Endothelial cell of umbilical vein (primary cell): ENCODE measurements at regions of chr6 and their contacts with region 1.

Region 1: GRCh38 chr6:43506667-43507471 is 3.3 kb downstream of the LRRC73 start:
- DNase-seq: peak; percentile 82
- H3K4me3 ChIP-seq: no peak overlapping the region
- H3K27ac ChIP-seq: no peak overlapping the region
- H3K4me1 ChIP-seq: peaks cover 7% of the 10 kb centered on the region
- H3K27me3 ChIP-seq: no peaks in the 10 kb centered on the region
- CTCF ChIP-seq: peak; percentile 91 to 94
- POLR2A ChIP-seq: no peak

Region 2: DNA sequence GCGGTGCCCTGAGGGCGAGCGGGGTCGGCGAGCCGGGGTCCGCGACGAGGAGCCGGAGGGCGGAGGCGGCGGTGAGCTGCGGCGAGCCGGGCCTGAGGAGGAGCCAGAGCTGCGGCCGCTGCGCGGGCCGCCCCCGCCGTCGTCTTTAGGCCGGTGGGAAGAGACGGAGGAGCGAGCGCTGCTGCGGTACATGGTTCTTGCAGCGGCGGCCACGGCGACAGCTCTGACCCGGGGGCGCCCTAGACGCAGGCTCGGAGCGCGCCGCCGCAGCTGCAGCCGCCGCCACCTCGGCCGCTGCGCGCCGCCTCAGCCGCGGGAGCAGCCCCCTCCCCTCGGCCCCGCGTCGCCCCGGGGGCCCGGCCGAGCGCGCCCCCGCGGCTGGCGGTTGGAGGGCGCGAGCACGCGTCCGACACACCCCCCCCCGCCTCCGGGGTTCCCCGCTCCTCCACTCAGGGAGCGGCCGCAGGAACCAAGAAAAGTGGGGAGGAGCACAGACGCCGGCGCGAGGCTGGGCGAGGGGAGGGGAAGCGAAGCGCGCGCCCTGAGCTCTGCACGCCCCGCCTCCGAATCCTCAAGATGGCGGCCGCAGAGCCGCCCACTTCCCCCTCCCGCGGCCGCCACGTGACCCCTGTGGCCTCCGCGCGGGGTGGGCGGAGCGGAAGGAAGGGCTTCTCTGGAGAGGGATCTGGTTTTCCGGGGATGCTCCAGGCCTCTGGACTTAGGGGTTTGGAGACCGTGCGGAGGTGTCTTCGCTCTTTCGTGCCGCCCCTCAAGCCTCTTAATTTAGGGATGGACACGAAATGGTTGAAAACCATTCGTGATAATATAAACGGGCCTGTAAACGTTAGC is 137.5 kb before region 1 on chr6 and contains the start of gene ZNF318:
- CTCF ChIA-PET with region 1: interaction called, 15 read pairs
- POLR2A ChIA-PET with region 1: no interaction called
- dilution Hi-C with region 1: no loop called
- intact Hi-C with region 1: no loop called
- DNase-seq: peak; percentile 95
- H3K4me3 ChIP-seq: peak within 1 kb of the TSS; percentile 31 to 66 (median 63)
- H3K27ac ChIP-seq: peak within 1 kb of the TSS; percentile 51
- H3K4me1 ChIP-seq: peaks cover 8% of the 10 kb centered on the region
- H3K27me3 ChIP-seq: no peaks in the 10 kb centered on the region
- CTCF ChIP-seq: no peak
- POLR2A ChIP-seq: peak; percentile 73
- total RNA-seq, gene ZNF318: 13.0 and 13.6 TPM in 2 replicates

Region 3: GRCh38 chr6:43454696-43455530 is 52.0 kb before region 1 on chr6:
- CTCF ChIA-PET with region 1: interaction called, 289 read pairs
- POLR2A ChIA-PET with region 1: interaction called, 4 read pairs
- dilution Hi-C with region 1: no loop called
- intact Hi-C with region 1: loop called (anchors 1 kb)
- DNase-seq: peak; percentile 75
- H3K4me3 ChIP-seq: peak overlapping the region; percentile 42 to 62 (median 46)
- H3K27ac ChIP-seq: no peak overlapping the region
- H3K4me1 ChIP-seq: peaks cover 9% of the 10 kb centered on the region
- H3K27me3 ChIP-seq: peaks cover 6 to 17% of the 10 kb centered on the region in 2 experiments
- CTCF ChIP-seq: no peak
- POLR2A ChIP-seq: peak; percentile 12

Region 4: GRCh38 chr6:43489277-43490072 is 17.4 kb before region 1 on chr6:
- CTCF ChIA-PET with region 1: interaction called, 58 read pairs
- POLR2A ChIA-PET with region 1: interaction called, 7 read pairs
- dilution Hi-C with region 1: no loop called
- intact Hi-C with region 1: no loop called
- DNase-seq: no peak
- H3K4me3 ChIP-seq: no peak overlapping the region
- H3K27ac ChIP-seq: no peak overlapping the region
- H3K4me1 ChIP-seq: peaks cover 12% of the 10 kb centered on the region
- H3K27me3 ChIP-seq: no peaks in the 10 kb centered on the region
- CTCF ChIP-seq: no peak
- POLR2A ChIP-seq: no peak

Region 5: DNA sequence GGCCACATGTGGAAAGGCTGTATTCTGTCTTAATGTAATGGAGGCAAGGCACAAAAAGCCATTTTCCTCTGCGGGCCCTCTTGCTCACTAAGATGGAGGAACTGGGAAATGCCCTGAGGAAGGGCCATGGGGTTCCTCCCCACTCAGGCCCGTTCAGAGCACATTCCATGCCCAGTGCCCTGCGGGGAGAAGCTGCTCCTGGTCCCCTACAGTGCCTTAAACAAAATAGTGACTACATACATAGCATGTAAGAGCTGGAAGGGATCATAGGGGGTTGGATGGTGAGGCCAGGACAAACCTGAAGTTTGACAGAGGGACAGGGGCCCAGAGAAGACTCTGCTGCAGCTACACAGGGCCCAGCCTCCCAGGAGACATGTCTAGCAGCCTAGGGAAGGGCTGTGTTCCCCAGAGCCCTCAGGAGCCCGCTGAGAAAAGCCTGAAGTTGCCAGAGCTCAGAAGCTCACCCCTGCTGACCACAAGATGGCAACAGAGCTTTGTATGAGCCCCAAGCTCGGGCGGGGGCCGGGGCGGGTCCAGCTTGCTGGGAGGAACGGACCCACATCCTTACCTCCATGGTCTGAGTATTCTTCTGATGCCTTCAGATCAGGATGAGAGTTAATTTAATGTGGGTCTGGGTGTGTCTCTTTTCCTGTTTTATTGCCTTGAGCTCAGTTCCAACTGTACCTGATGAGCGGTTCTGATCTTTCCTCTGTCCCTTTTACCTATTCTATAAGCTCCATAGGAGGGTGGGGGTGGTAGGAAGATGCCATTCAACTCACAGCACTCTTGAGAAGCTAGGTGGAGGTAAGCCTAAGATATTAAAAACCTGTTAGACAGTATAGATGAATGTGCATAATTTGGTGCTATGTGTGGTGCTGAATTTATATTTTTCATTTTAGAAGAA is 1123.5 kb after region 1 on chr6:
- CTCF ChIA-PET with region 1: no interaction called
- POLR2A ChIA-PET with region 1: no interaction called
- dilution Hi-C with region 1: no loop called
- intact Hi-C with region 1: no loop called
- DNase-seq: peak; percentile 19
- H3K4me3 ChIP-seq: no peak overlapping the region
- H3K27ac ChIP-seq: no peak overlapping the region
- H3K4me1 ChIP-seq: no peaks in the 10 kb centered on the region
- H3K27me3 ChIP-seq: peaks cover 3 to 4% of the 10 kb centered on the region in 2 experiments
- CTCF ChIP-seq: peak; percentile 13 to 63
- POLR2A ChIP-seq: no peak

Region 6: DNA sequence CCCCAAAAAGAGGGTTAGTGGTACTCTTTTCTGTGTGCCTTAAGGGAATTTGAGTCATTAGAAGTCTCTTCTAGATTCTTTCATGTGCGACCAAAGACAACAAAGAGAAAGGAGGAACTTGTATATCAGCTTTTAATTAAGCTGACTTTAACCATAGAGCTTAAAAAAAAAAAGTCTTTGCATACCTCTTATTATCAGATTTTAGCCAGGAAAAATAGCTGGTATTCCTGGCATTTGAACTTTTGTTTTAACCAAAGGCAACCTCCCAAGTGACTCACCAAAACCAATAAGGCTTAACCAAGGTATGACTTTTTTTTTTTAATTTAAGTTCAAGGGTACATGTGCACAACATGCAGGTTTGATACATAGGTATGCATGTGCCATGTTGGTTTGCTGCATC is 1255.6 kb after region 1 on chr6:
- CTCF ChIA-PET with region 1: no interaction called
- POLR2A ChIA-PET with region 1: no interaction called
- dilution Hi-C with region 1: no loop called
- intact Hi-C with region 1: no loop called
- DNase-seq: no peak
- H3K4me3 ChIP-seq: no peak overlapping the region
- H3K27ac ChIP-seq: no peak overlapping the region
- H3K4me1 ChIP-seq: no peaks in the 10 kb centered on the region
- H3K27me3 ChIP-seq: no peaks in the 10 kb centered on the region
- CTCF ChIP-seq: no peak
- POLR2A ChIP-seq: no peak